PC-9 (cell line): ENCODE measurements at regions of chr1 and their contacts with region 1.

Region 1: GRCh38 chr1:145782166-145783099 is 41.5 kb downstream of the RNF115 start:
- DNase-seq: peak; percentile 58 to 95
- H3K4me3 ChIP-seq: no peak overlapping the region
- H3K27ac ChIP-seq: peak overlapping the region; percentile 92
- H3K4me1 ChIP-seq: peaks cover 49% of the 10 kb centered on the region
- H3K27me3 ChIP-seq: no peaks in the 10 kb centered on the region
- CTCF ChIP-seq: no peak

Region 2: DNA sequence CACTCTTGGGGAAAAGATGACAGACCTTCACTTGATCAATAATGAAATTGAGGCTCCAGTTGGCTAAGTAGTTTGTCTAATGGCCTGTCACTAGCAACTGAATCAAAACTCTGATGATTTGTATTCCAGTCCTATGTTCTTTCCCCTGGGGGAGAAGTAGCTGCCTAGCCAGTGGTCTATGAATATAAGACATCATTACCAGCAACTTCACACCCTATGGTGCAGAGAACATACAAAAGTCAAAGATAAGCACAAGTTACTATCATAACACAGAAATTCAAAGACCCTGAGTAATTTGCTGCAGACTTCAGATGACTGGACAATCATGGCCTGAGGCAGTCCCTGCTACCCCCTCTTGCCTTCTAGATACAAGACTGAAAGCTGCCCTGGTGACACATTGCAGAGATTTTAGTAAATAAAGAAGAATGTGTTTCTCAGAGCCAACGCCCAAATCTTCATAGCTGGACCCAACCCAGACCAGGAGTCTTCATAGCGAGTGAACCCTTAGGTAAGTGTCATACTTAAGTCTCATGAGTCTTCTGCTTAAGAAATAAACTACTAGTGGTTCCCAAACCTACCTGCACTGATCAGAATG is 76.2 kb before region 1 on chr1:
- CTCF ChIA-PET with region 1: no interaction called
- POLR2A ChIA-PET with region 1: no interaction called
- intact Hi-C with region 1: no loop called
- DNase-seq: peak; percentile 83 to 99
- H3K4me3 ChIP-seq: no peak overlapping the region
- H3K27ac ChIP-seq: peak overlapping the region; percentile 68
- H3K4me1 ChIP-seq: peaks cover 39% of the 10 kb centered on the region
- H3K27me3 ChIP-seq: no peaks in the 10 kb centered on the region
- CTCF ChIP-seq: no peak

Region 3: GRCh38 chr1:145823565-145824498 is 41.4 kb after region 1 on chr1 and contains the starts of genes POLR3C and RNF115:
- CTCF ChIA-PET with region 1: no interaction called
- POLR2A ChIA-PET with region 1: interaction called, 16 read pairs
- intact Hi-C with region 1: loop called (anchors 2 kb)
- DNase-seq: peak; percentile 69 to 86
- H3K4me3 ChIP-seq: peak within 1 kb of the TSS; percentile 85
- H3K27ac ChIP-seq: peak within 1 kb of the TSS; percentile 81
- H3K4me1 ChIP-seq: peaks cover 16% of the 10 kb centered on the region
- H3K27me3 ChIP-seq: no peaks in the 10 kb centered on the region
- CTCF ChIP-seq: no peak
- total RNA-seq, gene POLR3C: 21.2 and 21.4 TPM in 2 replicates
- total RNA-seq, gene RNF115: 8.8 and 11.0 TPM in 2 replicates